ENCODE measurements at regions of chr1 and their contacts with region 1.

Region 1: GRCh38 chr1:8848663-8849386 is 29.7 kb downstream of the ENO1 start:
- DNase-seq: no peak
- ATAC-seq: peak; percentile 98
- H3K4me3 ChIP-seq: no peak overlapping the region
- H3K27ac ChIP-seq: no peak overlapping the region
- H3K4me1 ChIP-seq: peaks cover 2% of the 10 kb centered on the region; the same call in 1 of the 2 replicates
- H3K27me3 ChIP-seq: no peaks in the 10 kb centered on the region
- CTCF ChIP-seq: peak; percentile 82 to 95 (median 87)
- EP300 ChIP-seq: no peak
- POLR2A ChIP-seq: no peak
- RAD21 ChIP-seq: peak; percentile 87

Region 2: GRCh38 chr1:8525558-8526275 is 323.1 kb before region 1 on chr1:
- CTCF ChIA-PET with region 1: no interaction called
- POLR2A ChIA-PET with region 1: no interaction called
- RAD21 ChIA-PET with region 1: interaction called, 11 read pairs
- SMC1A ChIA-PET with region 1: interaction called, 6 read pairs
- in situ Hi-C with region 1: no loop called
- intact Hi-C with region 1: no loop called
- DNase-seq: peak; percentile 66
- ATAC-seq: peak; percentile 85
- H3K4me3 ChIP-seq: peak overlapping the region; percentile 67
- H3K27ac ChIP-seq: peak overlapping the region; percentile 67
- H3K4me1 ChIP-seq: peaks cover 23% of the 10 kb centered on the region
- H3K27me3 ChIP-seq: no peaks in the 10 kb centered on the region
- CTCF ChIP-seq: no peak
- EP300 ChIP-seq: no peak
- POLR2A ChIP-seq: no peak; the same call in 1 of the 2 replicates
- RAD21 ChIP-seq: no peak

Region 3: DNA sequence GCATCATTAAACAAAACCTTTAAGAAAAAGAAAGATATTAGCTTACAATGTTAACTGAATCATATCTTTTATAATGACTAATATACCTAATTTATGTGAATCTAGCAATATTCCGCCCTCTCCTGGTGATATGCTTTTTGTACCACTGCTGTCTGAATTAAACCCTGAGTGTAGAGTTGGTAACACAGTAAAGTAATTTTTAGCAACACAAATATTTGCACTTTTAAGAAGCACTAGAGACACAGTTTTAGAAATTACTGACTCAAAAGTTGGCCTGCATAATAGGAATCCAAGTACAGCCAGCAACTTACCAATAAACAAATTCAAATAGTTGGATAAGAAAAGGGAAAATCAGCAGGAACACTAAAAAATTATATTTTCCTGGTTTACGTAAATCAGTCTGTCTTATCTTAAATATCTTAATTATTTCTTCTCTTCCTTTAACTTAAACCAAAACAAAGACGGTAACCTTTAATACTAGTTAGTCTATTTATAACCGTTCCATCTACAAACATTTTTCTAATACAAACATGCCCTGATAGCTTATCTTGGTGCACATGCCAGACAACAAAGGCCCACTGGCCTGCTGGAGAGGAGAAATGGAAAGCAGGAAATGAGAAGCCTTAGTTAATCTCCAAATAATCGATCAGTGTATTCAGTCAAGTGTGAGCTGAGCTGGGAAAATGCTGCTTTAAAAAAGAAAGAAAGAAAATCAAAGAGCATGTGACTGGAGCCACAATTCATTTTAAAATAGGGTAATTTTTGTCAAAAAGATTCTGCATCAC is 277.4 kb before region 1 on chr1:
- CTCF ChIA-PET with region 1: interaction called, 15 read pairs
- POLR2A ChIA-PET with region 1: interaction called, 4 read pairs
- RAD21 ChIA-PET with region 1: no interaction called
- SMC1A ChIA-PET with region 1: interaction called, 6 read pairs
- in situ Hi-C with region 1: no loop called
- intact Hi-C with region 1: no loop called
- DNase-seq: no peak
- ATAC-seq: 0 out of 3 replicates have a peak, but pooled peaks have one; percentile 36
- H3K4me3 ChIP-seq: no peak overlapping the region
- H3K27ac ChIP-seq: no peak overlapping the region
- H3K4me1 ChIP-seq: no peaks in the 10 kb centered on the region
- H3K27me3 ChIP-seq: no peaks in the 10 kb centered on the region
- CTCF ChIP-seq: peak in 2 of 3 experiments; percentile 10 to 16; a peak in 1 of 6 replicates
- EP300 ChIP-seq: no peak
- POLR2A ChIP-seq: no peak
- RAD21 ChIP-seq: 0 out of 2 replicates have a peak, but pooled peaks have one; percentile 10

Region 4: DNA sequence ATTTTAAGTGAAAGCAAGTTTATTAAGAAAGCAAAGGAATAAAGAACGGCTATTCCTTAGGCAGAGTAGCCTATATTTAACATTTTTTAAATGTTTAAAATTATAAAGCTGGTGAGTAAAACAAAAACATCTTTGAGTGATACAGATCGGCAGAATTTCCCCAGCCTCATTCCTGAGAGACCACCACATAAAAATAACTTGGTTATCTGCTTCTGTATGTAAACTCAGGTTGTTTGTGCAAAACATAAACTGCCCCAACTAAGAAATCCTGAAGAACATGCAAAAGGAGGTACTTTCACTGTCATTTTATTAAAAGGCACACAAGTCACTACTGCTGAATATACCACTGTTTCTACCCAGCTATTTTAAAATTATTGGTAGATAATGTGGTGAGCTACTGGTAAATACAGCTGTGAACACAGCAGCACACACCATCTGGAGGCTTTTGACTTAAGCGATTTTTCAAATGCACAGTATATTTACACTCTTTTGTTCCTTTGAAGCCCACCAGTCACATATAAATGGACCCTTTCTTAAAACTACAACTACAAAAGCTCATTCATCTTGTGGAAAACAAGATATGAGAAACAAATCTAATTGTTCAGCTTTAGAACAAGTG is 150.7 kb before region 1 on chr1:
- CTCF ChIA-PET with region 1: interaction called, 16 read pairs
- POLR2A ChIA-PET with region 1: no interaction called
- RAD21 ChIA-PET with region 1: interaction called, 4 read pairs
- SMC1A ChIA-PET with region 1: interaction called, 3 read pairs
- in situ Hi-C with region 1: no loop called
- intact Hi-C with region 1: no loop called
- DNase-seq: no peak
- ATAC-seq: no peak
- H3K4me3 ChIP-seq: no peak overlapping the region
- H3K27ac ChIP-seq: no peak overlapping the region
- H3K4me1 ChIP-seq: no peaks in the 10 kb centered on the region; the same call in 1 of the 2 replicates
- H3K27me3 ChIP-seq: no peaks in the 10 kb centered on the region
- CTCF ChIP-seq: no peak
- EP300 ChIP-seq: no peak
- POLR2A ChIP-seq: no peak
- RAD21 ChIP-seq: no peak

Region 5: GRCh38 chr1:8718850-8719361 is 129.9 kb before region 1 on chr1:
- CTCF ChIA-PET with region 1: interaction called, 143 read pairs
- POLR2A ChIA-PET with region 1: interaction called, 3 read pairs
- RAD21 ChIA-PET with region 1: interaction called, 31 read pairs
- SMC1A ChIA-PET with region 1: interaction called, 101 read pairs
- in situ Hi-C with region 1: no loop called
- intact Hi-C with region 1: no loop called
- DNase-seq: no peak
- ATAC-seq: peak; percentile 58
- H3K4me3 ChIP-seq: no peak overlapping the region
- H3K27ac ChIP-seq: no peak overlapping the region
- H3K4me1 ChIP-seq: peaks cover 23% of the 10 kb centered on the region
- H3K27me3 ChIP-seq: no peaks in the 10 kb centered on the region
- CTCF ChIP-seq: peak; percentile 15 to 40 (median 22); a peak in 4 of 6 replicates
- EP300 ChIP-seq: no peak
- POLR2A ChIP-seq: no peak
- RAD21 ChIP-seq: peak; percentile 23; the same call in 1 of the 2 replicates

Region 6: GRCh38 chr1:8790987-8791386 is 57.8 kb before region 1 on chr1:
- CTCF ChIA-PET with region 1: interaction called, 14 read pairs
- POLR2A ChIA-PET with region 1: interaction called, 6 read pairs
- RAD21 ChIA-PET with region 1: interaction called, 3 read pairs
- SMC1A ChIA-PET with region 1: no interaction called
- in situ Hi-C with region 1: no loop called
- intact Hi-C with region 1: no loop called
- DNase-seq: no peak
- ATAC-seq: no peak
- H3K4me3 ChIP-seq: no peak overlapping the region
- H3K27ac ChIP-seq: no peak overlapping the region
- H3K4me1 ChIP-seq: no peaks in the 10 kb centered on the region
- H3K27me3 ChIP-seq: no peaks in the 10 kb centered on the region
- CTCF ChIP-seq: no peak
- EP300 ChIP-seq: no peak
- POLR2A ChIP-seq: no peak
- RAD21 ChIP-seq: no peak

Region 7: DNA sequence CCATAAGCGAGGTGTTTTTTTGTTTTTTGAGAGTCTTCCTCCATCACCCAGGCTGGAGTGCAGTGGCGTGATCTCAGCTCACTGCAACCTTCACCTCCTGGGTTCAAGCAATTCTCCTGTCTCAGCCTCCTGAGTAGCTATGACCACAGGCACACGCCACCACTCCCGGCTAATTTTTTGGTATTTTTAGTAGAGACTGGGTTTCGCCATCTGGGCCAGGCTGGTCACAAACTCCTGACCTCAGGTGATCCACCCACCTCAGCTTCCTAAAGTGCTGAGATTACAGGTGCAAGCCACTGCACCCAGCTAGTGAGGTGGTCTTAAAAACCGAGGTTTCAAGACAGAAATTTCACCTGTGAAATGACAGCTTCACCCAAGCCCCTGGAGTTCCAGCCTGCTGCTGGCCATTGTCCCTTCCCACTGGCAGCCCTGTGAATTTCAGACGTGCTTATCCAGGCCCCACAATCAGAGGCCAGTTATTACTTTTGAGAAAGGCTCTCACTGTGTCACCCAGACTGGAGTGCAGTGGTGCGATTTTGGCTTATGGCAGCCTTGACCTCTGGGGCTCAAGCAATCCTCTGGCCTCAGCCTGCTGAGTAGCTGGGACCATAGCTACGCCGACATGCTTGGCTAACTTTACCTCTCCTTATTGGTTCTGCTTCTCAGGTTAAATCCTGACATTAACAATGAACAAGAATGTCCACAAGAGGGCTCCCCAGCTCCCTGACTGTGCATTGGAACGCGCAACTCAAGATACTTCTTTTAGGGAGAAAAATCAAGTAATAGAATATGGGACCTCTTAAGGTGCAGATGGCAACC is 10.3 kb after region 1 on chr1:
- CTCF ChIA-PET with region 1: interaction called, 52 read pairs
- POLR2A ChIA-PET with region 1: interaction called, 5 read pairs
- RAD21 ChIA-PET with region 1: interaction called, 7 read pairs
- SMC1A ChIA-PET with region 1: interaction called, 31 read pairs
- in situ Hi-C with region 1: no loop called
- intact Hi-C with region 1: no loop called
- DNase-seq: no peak
- ATAC-seq: peak; percentile 72
- H3K4me3 ChIP-seq: no peak overlapping the region
- H3K27ac ChIP-seq: no peak overlapping the region
- H3K4me1 ChIP-seq: no peaks in the 10 kb centered on the region
- H3K27me3 ChIP-seq: no peaks in the 10 kb centered on the region
- CTCF ChIP-seq: peak; percentile 60 to 62 (median 62); a peak in 5 of 6 replicates
- EP300 ChIP-seq: no peak
- POLR2A ChIP-seq: peak; percentile 60
- RAD21 ChIP-seq: peak; percentile 42; the same call in 1 of the 2 replicates

Region 8: GRCh38 chr1:9058465-9058864 is 209.6 kb after region 1 on chr1:
- CTCF ChIA-PET with region 1: no interaction called
- POLR2A ChIA-PET with region 1: no interaction called
- RAD21 ChIA-PET with region 1: no interaction called
- SMC1A ChIA-PET with region 1: no interaction called
- in situ Hi-C with region 1: no loop called
- intact Hi-C with region 1: no loop called
- DNase-seq: no peak
- ATAC-seq: no peak
- H3K4me3 ChIP-seq: no peak overlapping the region
- H3K27ac ChIP-seq: no peak overlapping the region
- H3K4me1 ChIP-seq: peaks cover 13% of the 10 kb centered on the region
- H3K27me3 ChIP-seq: no peaks in the 10 kb centered on the region
- CTCF ChIP-seq: no peak
- EP300 ChIP-seq: no peak
- POLR2A ChIP-seq: no peak
- RAD21 ChIP-seq: no peak

Region 9: DNA sequence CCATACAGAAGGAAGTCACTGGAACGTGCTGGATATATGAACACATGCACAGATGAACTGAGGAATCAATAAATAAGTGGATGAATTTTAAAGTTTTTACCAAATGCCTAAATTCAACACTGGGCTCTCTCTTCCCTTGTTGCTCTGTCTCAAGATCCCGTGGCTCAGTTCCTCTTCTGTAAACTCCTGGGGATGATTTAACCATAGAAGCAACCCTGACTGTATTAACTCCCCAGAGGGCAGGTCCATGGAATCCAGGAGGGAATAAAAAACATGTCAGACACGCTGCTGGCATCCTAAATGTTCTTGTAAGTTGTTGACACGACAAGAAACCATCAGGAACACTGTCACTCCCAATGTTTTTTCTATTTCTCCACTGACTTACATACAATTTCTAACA is 325.4 kb after region 1 on chr1:
- CTCF ChIA-PET with region 1: no interaction called
- POLR2A ChIA-PET with region 1: no interaction called
- RAD21 ChIA-PET with region 1: no interaction called
- SMC1A ChIA-PET with region 1: no interaction called
- in situ Hi-C with region 1: no loop called
- intact Hi-C with region 1: no loop called
- DNase-seq: no peak
- ATAC-seq: peak; percentile 46
- H3K4me3 ChIP-seq: no peak overlapping the region
- H3K27ac ChIP-seq: no peak overlapping the region
- H3K4me1 ChIP-seq: peaks cover 6% of the 10 kb centered on the region
- H3K27me3 ChIP-seq: no peaks in the 10 kb centered on the region
- CTCF ChIP-seq: no peak
- EP300 ChIP-seq: no peak
- POLR2A ChIP-seq: no peak
- RAD21 ChIP-seq: no peak